Activated CD4-positive, alpha-beta T cell treated with anti-CD3 and anti-CD28 coated beads, Interleukin-2, amount 10 ng/mL, durations not matched to agents 24 days and 14 days (primary cell): ENCODE measurements at regions of chr1 and their contacts with region 1.

Region 1: GRCh38 chr1:11262171-11263049 is at the start of gene MTOR:
- DNase-seq: peak; percentile 99
- H3K4me3 Mint-ChIP-seq: peak within 1 kb of the TSS; percentile 90
- H3K27ac Mint-ChIP-seq: peak within 1 kb of the TSS; percentile 81
- H3K4me1 Mint-ChIP-seq: peaks cover 7% of the 10 kb centered on the region
- H3K27me3 Mint-ChIP-seq: peaks cover 5% of the 10 kb centered on the region
- total RNA-seq, gene MTOR: 48.1 and 54.4 TPM in 2 replicates

Region 2: DNA sequence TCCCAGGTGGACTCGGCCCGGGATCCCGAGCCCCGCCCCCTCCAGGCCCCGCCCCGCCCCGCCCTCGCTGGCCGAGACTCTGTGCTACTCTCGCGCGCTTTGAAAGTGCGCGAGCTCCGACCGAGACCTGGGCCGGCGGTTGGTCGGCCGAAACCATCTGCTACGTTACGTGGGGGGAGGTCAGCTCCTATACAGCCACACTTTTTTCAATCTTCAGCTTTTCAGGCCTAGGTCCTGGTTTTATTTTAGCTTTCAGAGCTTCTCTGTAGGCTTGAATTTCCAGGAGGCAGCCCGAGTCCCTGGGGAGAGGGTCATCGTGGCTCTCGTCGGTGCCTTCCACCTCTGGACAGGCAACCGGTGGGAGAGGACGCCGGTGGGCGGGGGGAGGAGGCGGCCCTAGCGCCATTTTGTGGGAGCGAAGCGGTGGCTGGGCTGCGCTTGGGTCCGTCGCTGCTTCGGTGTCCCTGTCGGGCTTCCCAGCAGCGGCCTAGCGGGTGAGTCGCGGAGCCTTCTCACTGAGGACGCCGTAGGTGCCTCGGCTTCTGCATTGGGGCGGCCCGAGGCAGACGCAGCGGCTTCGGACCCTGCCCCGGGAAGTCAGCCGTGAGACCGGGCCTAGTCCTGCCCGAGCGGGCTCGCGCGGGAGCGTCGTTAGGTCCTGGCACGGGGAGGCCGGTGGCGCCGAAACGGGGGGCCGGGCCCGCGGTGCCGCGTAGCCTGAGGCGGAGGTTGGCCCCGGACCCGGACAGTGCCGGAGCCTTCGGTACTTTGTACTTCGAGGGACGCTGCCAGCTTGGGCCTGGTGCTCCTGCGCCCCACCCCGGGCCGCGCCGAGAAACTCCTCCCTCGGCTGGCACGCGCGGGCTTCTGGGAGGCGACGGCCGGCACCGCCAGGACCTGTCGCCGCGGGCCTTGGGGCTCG is 249.9 kb before region 1 on chr1 and contains the start of gene TARDBP:
- intact Hi-C with region 1: loop called (anchors 2 kb)
- DNase-seq: peak; percentile 97
- H3K4me3 Mint-ChIP-seq: peak within 1 kb of the TSS; percentile 88
- H3K27ac Mint-ChIP-seq: peak within 1 kb of the TSS; percentile 98
- H3K4me1 Mint-ChIP-seq: peaks cover 18% of the 10 kb centered on the region
- H3K27me3 Mint-ChIP-seq: no peaks in the 10 kb centered on the region
- total RNA-seq, gene TARDBP: 211 and 224 TPM in 2 replicates

Region 3: GRCh38 chr1:11059990-11060830 is 202.2 kb before region 1 on chr1 and contains the start of gene SRM:
- intact Hi-C with region 1: loop called (anchors 5 kb)
- DNase-seq: peak; percentile 98
- H3K4me3 Mint-ChIP-seq: peak within 1 kb of the TSS; percentile 98
- H3K27ac Mint-ChIP-seq: peak within 1 kb of the TSS; percentile 92
- H3K4me1 Mint-ChIP-seq: peaks cover 31% of the 10 kb centered on the region
- H3K27me3 Mint-ChIP-seq: no peaks in the 10 kb centered on the region
- total RNA-seq, gene SRM: 334 and 346 TPM in 2 replicates

Region 4: DNA sequence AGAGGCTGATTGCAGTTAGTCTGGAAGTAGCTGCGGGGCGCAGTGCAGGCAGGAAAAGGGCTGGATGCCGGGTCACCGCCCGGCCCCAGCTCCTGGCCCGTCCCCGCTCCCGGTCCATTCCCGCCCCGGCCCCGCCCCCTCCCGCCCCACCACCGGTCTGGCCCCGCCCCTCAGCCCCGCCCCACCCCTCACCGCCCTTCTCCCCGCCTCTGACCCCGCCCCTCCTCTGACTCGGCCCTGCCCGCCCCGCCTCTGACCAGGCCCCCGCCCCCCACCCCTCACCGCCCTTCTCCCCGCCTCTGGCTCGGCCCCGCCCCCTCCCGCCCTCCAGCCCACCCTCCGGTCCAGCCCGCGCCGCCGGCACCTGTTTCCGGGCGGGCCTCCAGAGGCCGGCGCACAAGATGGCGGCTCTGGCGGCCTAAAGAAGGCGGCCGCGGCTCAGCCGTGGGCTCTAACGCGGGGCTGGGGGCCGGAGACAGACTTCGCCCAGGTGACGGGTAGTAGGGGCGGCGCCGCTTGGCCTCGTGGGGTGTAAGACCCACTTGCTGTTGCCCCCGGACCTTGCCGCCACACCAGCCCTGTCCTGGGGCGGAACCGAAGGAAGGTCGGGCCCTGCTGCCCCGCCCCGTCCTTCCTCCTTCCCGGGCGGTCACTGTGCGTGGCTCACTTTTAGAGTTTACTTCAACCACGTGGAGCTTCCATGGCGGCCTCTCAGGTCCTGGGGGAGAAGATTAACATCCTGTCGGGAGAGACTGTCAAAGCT is 10.6 kb after region 1 on chr1 and contains the start of gene UBIAD1:
- intact Hi-C with region 1: loop called (anchors 1 kb)
- DNase-seq: peak; percentile 93
- H3K4me3 Mint-ChIP-seq: peak within 1 kb of the TSS; percentile 91
- H3K27ac Mint-ChIP-seq: peak within 1 kb of the TSS; percentile 89
- H3K4me1 Mint-ChIP-seq: peaks cover 24% of the 10 kb centered on the region
- H3K27me3 Mint-ChIP-seq: peaks cover 2% of the 10 kb centered on the region
- total RNA-seq, gene UBIAD1: 32.4 and 32.5 TPM in 2 replicates

Region 5: GRCh38 chr1:11805447-11806306 is 543.3 kb after region 1 on chr1 and contains the starts of genes CLCN6 and MTHFR:
- intact Hi-C with region 1: loop called (anchors 5 kb)
- DNase-seq: peak; percentile 100
- H3K4me3 Mint-ChIP-seq: peak within 1 kb of the TSS; percentile 99
- H3K27ac Mint-ChIP-seq: peak within 1 kb of the TSS; percentile 95
- H3K4me1 Mint-ChIP-seq: peaks cover 53% of the 10 kb centered on the region
- H3K27me3 Mint-ChIP-seq: no peaks in the 10 kb centered on the region
- total RNA-seq, gene CLCN6: 12.7 and 15.2 TPM in 2 replicates
- total RNA-seq, gene MTHFR: 15.6 and 18.4 TPM in 2 replicates